ENCODE measurements at regions of chr5 and their contacts with region 1.

Region 1: DNA sequence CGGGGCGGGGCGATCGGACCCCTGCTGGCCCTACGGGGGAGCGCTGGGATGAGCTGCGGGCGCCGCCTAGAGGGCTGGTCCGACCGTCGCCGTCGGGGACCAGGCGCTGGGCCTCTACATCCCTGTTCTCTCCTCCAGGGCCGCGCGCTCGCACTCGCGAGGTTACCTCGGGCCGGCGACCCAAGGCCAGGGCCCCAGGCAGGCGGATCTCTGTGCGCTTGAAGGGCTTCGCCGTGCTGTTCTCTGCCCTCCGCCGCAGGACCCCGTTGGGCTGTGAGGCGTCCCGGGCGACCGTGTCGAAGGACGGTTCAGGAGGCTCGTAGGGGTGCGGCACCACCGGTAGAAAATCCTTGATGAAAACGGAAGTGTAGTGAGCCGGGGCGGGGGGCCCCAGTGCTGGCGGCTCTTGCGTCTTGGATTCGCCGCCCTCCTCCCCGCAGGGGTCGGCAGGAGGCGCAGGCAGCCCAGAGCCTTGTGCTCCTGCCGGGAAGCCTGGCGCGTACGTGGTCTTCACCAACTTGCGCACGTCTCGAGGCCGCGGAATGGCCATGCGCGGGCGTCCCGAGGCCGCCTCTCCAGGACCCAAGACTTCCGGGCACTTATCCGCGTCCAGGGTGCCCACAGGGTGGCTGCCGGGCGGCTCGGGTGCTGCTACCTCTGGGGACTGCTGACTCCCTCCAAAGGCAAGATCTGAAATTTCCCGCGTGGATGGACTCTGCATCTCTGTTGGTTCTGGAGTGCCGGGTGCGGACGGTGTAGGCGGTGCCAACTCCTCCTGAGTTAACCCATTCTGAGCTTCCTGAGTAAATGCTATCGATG is 2.0 kb downstream of the PROB1 start:
- DNase-seq: peak; percentile 89
- ATAC-seq: peak; percentile 62
- H3K4me3 Mint-ChIP-seq: peak overlapping the region; percentile 94
- H3K27ac Mint-ChIP-seq: peak overlapping the region; percentile 86
- H3K4me1 Mint-ChIP-seq: peaks cover 39% of the 10 kb centered on the region
- H3K27me3 Mint-ChIP-seq: no peaks in the 10 kb centered on the region
- CTCF ChIP-seq: no peak

Region 2: GRCh38 chr5:139197710-139198669 is 194.9 kb before region 1 on chr5 and contains the start of gene SIL1:
- CTCF ChIA-PET with region 1: no interaction called
- POLR2A ChIA-PET with region 1: interaction called, 6 read pairs
- intact Hi-C with region 1: loop called (anchors 5 kb)
- DNase-seq: peak; percentile 91
- ATAC-seq: peak; percentile 98
- H3K4me3 Mint-ChIP-seq: peak within 1 kb of the TSS; percentile 91
- H3K27ac Mint-ChIP-seq: peak within 1 kb of the TSS; percentile 90
- H3K4me1 Mint-ChIP-seq: peaks cover 21% of the 10 kb centered on the region
- H3K27me3 Mint-ChIP-seq: no peaks in the 10 kb centered on the region
- CTCF ChIP-seq: no peak
- total RNA-seq, gene SIL1: 16.1 and 22.0 TPM in 2 replicates

Region 3: GRCh38 chr5:139293504-139294373 is 99.1 kb before region 1 on chr5 and contains the start of gene MATR3:
- CTCF ChIA-PET with region 1: no interaction called
- POLR2A ChIA-PET with region 1: interaction called, 32 read pairs
- intact Hi-C with region 1: loop called (anchors 1 kb)
- DNase-seq: peak; percentile 87
- ATAC-seq: peak; percentile 90
- H3K4me3 Mint-ChIP-seq: peak within 1 kb of the TSS; percentile 97
- H3K27ac Mint-ChIP-seq: peak within 1 kb of the TSS; percentile 96
- H3K4me1 Mint-ChIP-seq: peaks cover 48% of the 10 kb centered on the region
- H3K27me3 Mint-ChIP-seq: no peaks in the 10 kb centered on the region
- CTCF ChIP-seq: no peak
- total RNA-seq, gene MATR3: 242 and 294 TPM in 2 replicates

Region 4: GRCh38 chr5:139341650-139342422 is 51.1 kb before region 1 on chr5 and contains the start of gene PAIP2:
- CTCF ChIA-PET with region 1: interaction called, 17 read pairs
- POLR2A ChIA-PET with region 1: interaction called, 112 read pairs
- intact Hi-C with region 1: loop called (anchors 1 kb)
- DNase-seq: peak; percentile 95
- ATAC-seq: peak; percentile 87
- H3K4me3 Mint-ChIP-seq: peak within 1 kb of the TSS; percentile 96
- H3K27ac Mint-ChIP-seq: peak within 1 kb of the TSS; percentile 95
- H3K4me1 Mint-ChIP-seq: peaks cover 52% of the 10 kb centered on the region
- H3K27me3 Mint-ChIP-seq: no peaks in the 10 kb centered on the region
- CTCF ChIP-seq: no peak
- total RNA-seq, gene PAIP2: 79.7 and 80.8 TPM in 2 replicates

Region 5: DNA sequence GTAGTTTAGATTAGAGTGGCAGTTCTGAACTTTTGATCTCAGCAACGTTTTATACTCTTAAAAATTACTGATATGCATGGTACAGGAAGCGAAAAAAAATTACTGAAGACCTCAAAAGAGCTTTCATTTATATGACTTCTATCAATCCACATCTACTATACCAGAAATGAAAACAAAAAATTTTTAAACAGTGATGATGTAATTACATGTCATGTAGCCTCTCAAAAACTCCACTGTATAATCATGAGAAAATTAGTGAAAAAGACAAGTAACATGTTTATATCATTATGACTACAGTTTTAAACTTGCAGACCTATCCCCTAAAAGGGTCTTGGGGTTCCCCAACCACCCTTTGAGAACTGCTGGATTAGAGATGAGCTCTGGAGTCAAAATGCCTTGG is 37.1 kb after region 1 on chr5:
- CTCF ChIA-PET with region 1: no interaction called
- POLR2A ChIA-PET with region 1: no interaction called
- intact Hi-C with region 1: no loop called
- DNase-seq: no peak
- ATAC-seq: no peak
- H3K4me3 Mint-ChIP-seq: no peak overlapping the region
- H3K27ac Mint-ChIP-seq: no peak overlapping the region
- H3K4me1 Mint-ChIP-seq: no peaks in the 10 kb centered on the region
- H3K27me3 Mint-ChIP-seq: no peaks in the 10 kb centered on the region
- CTCF ChIP-seq: no peak